ENCODE measurements at regions of chr14 and their contacts with region 1.

Region 1: DNA sequence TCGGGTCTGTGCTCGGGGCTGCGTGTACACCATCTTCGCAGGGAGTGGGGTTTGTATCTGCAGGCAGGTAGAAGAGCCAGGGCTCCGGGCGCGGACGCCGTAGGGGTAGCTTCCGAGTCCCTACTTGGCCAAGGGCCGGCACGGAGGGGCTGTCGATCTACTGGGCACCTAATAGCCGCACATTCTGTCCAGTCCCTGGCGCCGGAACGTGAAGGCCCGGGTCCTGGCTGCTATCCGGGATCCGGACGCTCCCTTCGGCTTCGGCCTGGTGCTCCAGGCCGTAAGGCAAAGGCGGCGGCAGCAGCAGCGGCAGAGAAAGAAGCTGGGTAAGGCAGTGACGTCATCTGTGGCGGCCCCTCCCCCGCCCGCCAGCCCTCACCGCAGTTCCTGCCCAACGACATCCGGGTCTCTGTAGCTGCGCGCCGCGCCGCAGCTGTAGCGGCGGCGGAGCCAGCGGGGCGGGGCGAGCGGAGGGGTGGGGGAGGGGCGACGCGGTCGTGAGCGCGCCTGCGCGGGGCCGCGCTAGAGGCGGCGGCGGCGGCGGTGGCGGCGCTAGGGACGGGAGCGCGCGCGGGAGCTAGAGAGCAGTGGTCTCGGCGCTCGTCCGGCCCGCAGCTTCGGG is at the start of gene PPM1A:
- DNase-seq: peak; percentile 97
- H3K4me3 ChIP-seq: peak within 1 kb of the TSS; percentile 86 to 98 (median 94)
- H3K27ac ChIP-seq: peak within 1 kb of the TSS; percentile 97 to 100 (median 98)
- H3K4me1 ChIP-seq: peaks cover 19 to 44% (median 40%) of the 10 kb centered on the region in 4 donors
- H3K27me3 ChIP-seq: no peaks in the 10 kb centered on the region
- CTCF ChIP-seq: no peak
- EP300 ChIP-seq: peak; percentile 45
- POLR2A ChIP-seq: peak; percentile 97
- total RNA-seq, gene PPM1A: 64.0 to 146 (median 93.2) TPM

Region 2: DNA sequence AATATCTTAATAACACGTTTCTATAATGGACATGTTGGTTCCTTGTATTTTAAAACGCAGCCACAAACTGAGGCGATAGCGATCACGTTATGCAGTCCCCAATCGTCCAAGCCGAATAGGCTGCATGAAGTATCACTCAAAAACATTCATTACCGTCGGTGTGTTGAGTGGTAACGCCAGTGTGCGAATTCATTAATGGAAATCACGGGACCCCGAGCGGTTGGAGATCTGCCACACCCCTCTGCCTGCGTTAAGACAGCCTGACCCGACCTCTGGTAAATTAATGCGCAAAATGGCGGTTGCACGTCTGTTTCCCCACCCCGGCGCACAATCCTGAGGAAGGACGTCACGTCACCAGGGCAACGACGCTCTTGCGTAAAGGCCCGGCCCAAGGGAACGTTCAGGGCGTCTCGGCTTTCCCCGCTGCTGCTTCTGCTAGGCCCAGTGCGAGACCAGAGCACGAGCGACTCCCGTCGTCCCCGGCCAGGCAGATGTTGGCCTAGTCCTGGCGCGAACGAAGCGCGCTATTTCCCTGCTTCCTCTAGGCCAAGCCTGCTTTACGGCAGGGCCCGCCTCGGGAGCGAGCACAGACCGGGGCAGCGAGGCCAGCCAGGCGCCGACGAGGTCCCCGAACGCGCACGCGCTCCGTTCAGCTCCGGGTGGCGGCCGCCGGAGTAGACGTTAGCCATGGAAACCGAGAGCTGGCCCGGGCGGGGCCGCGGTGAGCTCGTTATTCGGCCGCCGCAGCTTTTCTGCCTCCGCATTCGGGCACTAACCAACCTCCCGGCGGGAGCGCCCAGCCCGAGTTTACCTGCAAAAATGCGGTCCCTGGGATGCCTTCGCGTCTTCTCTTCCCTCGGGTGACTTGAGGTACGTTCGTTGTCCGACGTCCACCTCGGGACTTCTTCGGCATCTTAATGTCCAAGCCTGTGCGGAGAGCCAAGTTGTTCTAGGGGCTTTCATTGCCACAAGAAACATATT is 157.0 kb before region 1 on chr14 and contains the start of gene PCNX4:
- in situ Hi-C with region 1: no loop called
- intact Hi-C with region 1: loop called (anchors 2 kb)
- DNase-seq: peak; percentile 98
- H3K4me3 ChIP-seq: peak within 1 kb of the TSS; percentile 61 to 79 (median 71)
- H3K27ac ChIP-seq: peak within 1 kb of the TSS; percentile 96 to 99 (median 98)
- H3K4me1 ChIP-seq: peaks cover 19 to 41% (median 23%) of the 10 kb centered on the region in 4 donors
- H3K27me3 ChIP-seq: no peaks in the 10 kb centered on the region
- CTCF ChIP-seq: peak in 1 of 5 experiments; percentile 6
- EP300 ChIP-seq: peak; percentile 52
- POLR2A ChIP-seq: peak; percentile 95
- total RNA-seq, gene PCNX4: 32.9 to 118 (median 54.8) TPM

Region 3: DNA sequence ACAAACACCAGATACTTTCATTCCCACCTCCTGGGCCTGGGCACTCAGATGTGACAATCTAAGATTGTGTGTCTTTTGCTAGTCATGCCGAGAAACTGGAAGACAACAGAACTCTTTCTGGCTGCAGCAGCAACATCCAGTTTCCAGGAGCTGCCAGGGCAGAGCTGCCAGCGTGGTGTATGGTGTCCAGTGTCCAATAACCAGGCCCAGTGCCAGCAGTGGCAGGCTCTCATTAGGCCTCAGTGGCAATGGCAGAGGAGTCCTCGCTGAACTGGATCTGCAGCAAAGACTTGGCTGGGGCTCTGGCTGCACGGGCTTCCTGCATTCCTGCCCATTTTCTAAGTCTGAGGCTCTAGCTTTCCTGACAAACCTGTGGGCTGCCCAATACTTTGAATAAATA is 26.0 kb before region 1 on chr14:
- in situ Hi-C with region 1: no loop called
- intact Hi-C with region 1: loop called (anchors 1 kb)
- DNase-seq: no peak
- H3K4me3 ChIP-seq: no peak overlapping the region
- H3K27ac ChIP-seq: no peak overlapping the region
- H3K4me1 ChIP-seq: peaks cover 0 to 3% (median 0%) of the 10 kb centered on the region in 4 donors
- H3K27me3 ChIP-seq: no peaks in the 10 kb centered on the region
- CTCF ChIP-seq: no peak
- EP300 ChIP-seq: no peak
- POLR2A ChIP-seq: no peak